B cell (primary cell): ENCODE measurements at regions of chr9 and their contacts with region 1.

Region 1: GRCh38 chr9:37565661-37566618 is 10.2 kb downstream of the FBXO10 start:
- DNase-seq: peak; percentile 73
- ATAC-seq: peak; percentile 94
- H3K4me3 ChIP-seq: peak overlapping the region in 3 of 5 experiments; percentile 9 to 52 (median 33)
- H3K4me3 Mint-ChIP-seq: peak overlapping the region; percentile 83
- H3K27ac ChIP-seq: peak overlapping the region; percentile 70
- H3K27ac Mint-ChIP-seq: peak overlapping the region; percentile 94
- H3K4me1 ChIP-seq: peaks cover 59 to 76% of the 10 kb centered on the region in 2 donors
- H3K4me1 Mint-ChIP-seq: peaks cover 78% of the 10 kb centered on the region
- H3K27me3 ChIP-seq: no peaks in the 10 kb centered on the region
- H3K27me3 Mint-ChIP-seq: no peaks in the 10 kb centered on the region
- CTCF ChIP-seq: no peak

Region 2: GRCh38 chr9:37528652-37529510 is 37.1 kb before region 1 on chr9:
- CTCF ChIA-PET with region 1: interaction called, 8 read pairs
- POLR2A ChIA-PET with region 1: interaction called, 3 read pairs
- intact Hi-C with region 1: loop called (anchors 1 kb)
- DNase-seq: peak; percentile 82
- ATAC-seq: peak; percentile 80
- H3K4me3 ChIP-seq: no peak overlapping the region
- H3K4me3 Mint-ChIP-seq: peak overlapping the region; percentile 78
- H3K27ac ChIP-seq: peak overlapping the region in 1 of 2 donors; percentile 39
- H3K27ac Mint-ChIP-seq: peak overlapping the region; percentile 84
- H3K4me1 ChIP-seq: peaks cover 0 to 28% of the 10 kb centered on the region in 2 donors
- H3K4me1 Mint-ChIP-seq: peaks cover 37% of the 10 kb centered on the region
- H3K27me3 ChIP-seq: no peaks in the 10 kb centered on the region
- H3K27me3 Mint-ChIP-seq: no peaks in the 10 kb centered on the region
- CTCF ChIP-seq: no peak